ENCODE measurements at regions of chr10 and their contacts with region 1.

Region 1: DNA sequence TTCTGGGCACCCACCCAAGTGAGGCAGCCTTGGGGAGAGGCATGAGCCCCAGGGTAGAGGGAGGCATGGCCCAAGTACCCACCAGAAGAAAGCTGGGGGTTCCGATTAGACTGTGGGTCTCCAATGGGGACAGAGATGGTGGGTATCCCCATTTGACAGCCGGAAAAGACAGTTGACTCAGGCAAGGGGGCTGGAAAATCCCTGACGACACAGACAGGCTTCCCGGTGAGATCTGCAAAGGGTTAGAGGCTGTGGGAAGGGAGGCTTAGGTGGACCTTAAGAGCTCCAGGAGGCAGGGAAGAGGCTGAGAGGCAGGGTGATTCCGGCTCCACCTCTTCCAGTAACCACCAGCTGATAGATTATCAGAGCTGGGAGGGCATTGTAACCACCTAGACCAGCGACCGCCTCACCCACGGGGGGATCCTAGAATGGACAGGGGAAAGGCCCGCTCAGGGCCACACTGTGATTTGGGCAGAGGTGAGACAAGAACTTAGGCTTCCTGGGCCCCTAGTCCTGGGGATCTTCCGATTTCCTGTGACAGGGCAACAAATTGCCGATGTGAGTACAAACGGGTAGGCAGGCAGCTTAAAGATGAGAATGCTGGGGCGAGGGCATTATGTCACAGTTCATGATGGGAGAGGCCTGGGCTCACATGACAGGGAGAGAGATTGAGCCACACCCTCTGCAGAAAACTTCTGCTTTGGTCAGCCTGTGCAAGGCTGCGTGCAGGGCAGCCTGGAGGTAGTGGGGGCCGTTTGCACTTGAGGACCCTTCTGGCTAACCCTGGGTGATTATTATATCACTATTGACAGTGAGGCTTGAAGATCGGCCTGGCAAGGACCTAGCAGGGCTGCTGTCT is 5.4 kb downstream of the TBATA start:
- DNase-seq: no peak
- H3K4me3 ChIP-seq: no peak overlapping the region
- H3K27ac ChIP-seq: no peak overlapping the region
- H3K4me1 ChIP-seq: no peaks in the 10 kb centered on the region
- H3K27me3 ChIP-seq: no peaks in the 10 kb centered on the region
- CTCF ChIP-seq: no peak
- POLR2A ChIP-seq: no peak

Region 2: GRCh38 chr10:69819716-69820506 is 959.8 kb before region 1 on chr10:
- intact Hi-C with region 1: loop called (anchors 5 kb)
- DNase-seq: no peak
- H3K4me3 ChIP-seq: no peak overlapping the region
- H3K27ac ChIP-seq: no peak overlapping the region
- H3K4me1 ChIP-seq: no peaks in the 10 kb centered on the region
- H3K27me3 ChIP-seq: no peaks in the 10 kb centered on the region
- CTCF ChIP-seq: no peak
- POLR2A ChIP-seq: no peak